ENCODE measurements at regions of chr22 and their contacts with region 1.

Region 1: GRCh38 chr22:49149721-49150608 is 677.7 kb downstream of the BRD1 start:
- DNase-seq: no peak
- ATAC-seq: no peak
- H3K4me3 ChIP-seq: no peak overlapping the region
- H3K27ac ChIP-seq: no peak overlapping the region
- H3K4me1 ChIP-seq: no peaks in the 10 kb centered on the region
- H3K27me3 ChIP-seq: no peaks in the 10 kb centered on the region

Region 2: DNA sequence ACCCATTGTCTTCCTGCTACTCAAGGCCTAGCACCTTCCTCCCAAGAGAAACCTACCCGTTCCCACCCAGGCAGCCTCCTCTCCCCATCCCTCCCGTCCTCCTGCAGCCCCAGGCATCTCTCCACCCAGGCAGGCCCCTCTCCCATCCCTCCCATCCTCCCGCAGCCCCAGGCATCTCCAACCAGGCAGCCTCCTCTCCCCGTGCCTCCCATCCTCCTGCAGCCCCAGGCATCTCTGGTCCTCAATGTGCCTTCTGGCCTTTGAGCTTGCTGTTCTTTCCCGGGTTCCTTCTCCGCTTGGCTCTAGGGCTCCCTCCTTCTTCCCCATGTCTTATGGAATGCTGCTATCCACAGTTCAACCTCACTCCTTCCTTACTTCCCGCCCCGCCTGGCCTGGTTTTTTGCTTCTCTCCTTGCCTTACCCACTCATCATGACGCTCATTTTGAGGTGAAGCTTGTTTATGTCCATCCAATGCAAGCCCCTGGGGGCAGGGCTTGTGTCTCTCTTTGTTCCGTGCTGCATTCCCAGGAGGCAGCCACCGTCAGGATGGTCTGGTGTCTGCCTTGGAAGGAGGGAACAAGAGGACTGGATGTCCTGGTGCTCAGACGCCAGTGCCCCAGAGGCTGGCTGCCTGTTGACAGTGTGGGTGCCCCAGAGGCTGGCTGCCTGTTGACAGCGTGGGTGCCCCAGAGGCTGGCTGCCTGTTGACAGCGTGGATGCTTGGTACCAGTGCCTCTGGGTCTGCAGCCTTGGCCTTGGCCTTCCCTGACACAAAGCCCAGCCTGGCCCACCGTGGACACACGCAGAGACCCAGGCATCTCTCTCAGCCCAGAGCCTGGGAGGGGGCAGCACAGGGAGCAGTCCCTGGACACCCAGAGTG is 138.0 kb before region 1 on chr22:
- intact Hi-C with region 1: no loop called
- DNase-seq: peak in 1 of 3 donors; percentile 20
- ATAC-seq: no peak
- H3K4me3 ChIP-seq: no peak overlapping the region
- H3K27ac ChIP-seq: no peak overlapping the region
- H3K4me1 ChIP-seq: no peaks in the 10 kb centered on the region
- H3K27me3 ChIP-seq: no peaks in the 10 kb centered on the region

Region 3: DNA sequence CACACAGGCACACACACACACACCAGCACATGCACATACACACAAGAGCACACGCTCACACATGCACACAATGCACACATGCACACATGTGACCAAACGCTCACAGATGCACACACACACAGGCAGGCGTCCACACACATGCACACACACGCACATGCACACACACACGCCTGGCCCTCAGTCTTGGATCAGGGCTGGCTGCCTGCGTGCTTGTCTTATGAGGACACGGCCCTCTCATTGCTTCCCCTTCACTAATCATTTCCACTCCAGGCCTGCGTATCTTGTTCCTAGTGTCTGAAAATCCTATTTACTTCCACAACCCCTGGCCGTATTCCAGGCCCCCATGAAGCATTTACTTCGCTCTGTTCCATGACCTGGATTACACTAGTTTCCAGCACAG is 62.8 kb before region 1 on chr22:
- intact Hi-C with region 1: loop called in 1 of 4 experiments (anchors 10 kb)
- DNase-seq: peak in 2 of 3 donors; percentile 33 to 69
- ATAC-seq: peak; percentile 21 to 88
- H3K4me3 ChIP-seq: no peak overlapping the region
- H3K27ac ChIP-seq: no peak overlapping the region
- H3K4me1 ChIP-seq: no peaks in the 10 kb centered on the region
- H3K27me3 ChIP-seq: no peaks in the 10 kb centered on the region